GM10248 (cell line): ENCODE measurements at regions of chr17 and their contacts with region 1.

Region 1: GRCh38 chr17:55735731-55736405 is 13.2 kb upstream of the TMEM100 start:
- DNase-seq: peak; percentile 32
- CTCF ChIP-seq: peak; percentile 57

Region 2: DNA sequence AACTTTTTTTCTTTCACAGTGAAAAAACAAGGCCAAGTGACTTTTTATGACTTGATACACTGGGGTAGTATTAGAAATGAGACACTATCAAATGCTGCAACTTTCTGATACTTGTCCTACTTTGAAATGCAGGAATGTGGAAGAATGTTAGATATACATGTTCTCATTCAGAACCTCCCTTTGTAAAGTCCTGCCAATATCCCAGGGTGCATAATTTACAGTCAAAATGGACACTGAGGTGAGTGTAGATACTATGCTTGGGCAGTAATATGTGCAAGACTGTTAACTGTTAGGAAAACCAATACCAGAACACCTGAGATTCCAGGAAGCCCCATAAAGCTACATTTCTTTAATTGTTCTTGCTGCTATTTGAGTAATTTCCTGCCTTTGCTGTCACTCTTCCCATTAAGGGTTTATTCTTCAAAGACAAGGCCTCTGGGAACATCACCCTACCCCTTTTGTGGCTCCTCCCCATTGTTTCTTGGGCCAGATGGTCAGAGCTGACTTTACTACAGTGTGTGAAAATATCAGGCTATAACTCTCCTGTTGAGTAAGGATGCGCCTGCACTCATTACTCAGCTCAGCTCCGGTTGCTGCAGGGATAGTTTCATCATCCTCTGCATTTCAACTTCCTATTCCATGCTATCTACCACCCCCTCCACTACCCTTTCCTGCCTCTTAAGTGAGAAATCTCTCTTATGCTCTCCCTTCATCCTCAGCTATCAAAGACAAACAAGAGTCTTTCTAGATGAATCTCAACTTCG is 61.9 kb before region 1 on chr17:
- CTCF ChIA-PET with region 1: no interaction called
- POLR2A ChIA-PET with region 1: no interaction called
- DNase-seq: no peak
- CTCF ChIP-seq: no peak

Region 3: GRCh38 chr17:55717898-55718735 is 17.8 kb before region 1 on chr17:
- CTCF ChIA-PET with region 1: interaction called, 21 read pairs
- POLR2A ChIA-PET with region 1: no interaction called
- DNase-seq: peak; percentile 24
- CTCF ChIP-seq: peak; percentile 60

Region 4: DNA sequence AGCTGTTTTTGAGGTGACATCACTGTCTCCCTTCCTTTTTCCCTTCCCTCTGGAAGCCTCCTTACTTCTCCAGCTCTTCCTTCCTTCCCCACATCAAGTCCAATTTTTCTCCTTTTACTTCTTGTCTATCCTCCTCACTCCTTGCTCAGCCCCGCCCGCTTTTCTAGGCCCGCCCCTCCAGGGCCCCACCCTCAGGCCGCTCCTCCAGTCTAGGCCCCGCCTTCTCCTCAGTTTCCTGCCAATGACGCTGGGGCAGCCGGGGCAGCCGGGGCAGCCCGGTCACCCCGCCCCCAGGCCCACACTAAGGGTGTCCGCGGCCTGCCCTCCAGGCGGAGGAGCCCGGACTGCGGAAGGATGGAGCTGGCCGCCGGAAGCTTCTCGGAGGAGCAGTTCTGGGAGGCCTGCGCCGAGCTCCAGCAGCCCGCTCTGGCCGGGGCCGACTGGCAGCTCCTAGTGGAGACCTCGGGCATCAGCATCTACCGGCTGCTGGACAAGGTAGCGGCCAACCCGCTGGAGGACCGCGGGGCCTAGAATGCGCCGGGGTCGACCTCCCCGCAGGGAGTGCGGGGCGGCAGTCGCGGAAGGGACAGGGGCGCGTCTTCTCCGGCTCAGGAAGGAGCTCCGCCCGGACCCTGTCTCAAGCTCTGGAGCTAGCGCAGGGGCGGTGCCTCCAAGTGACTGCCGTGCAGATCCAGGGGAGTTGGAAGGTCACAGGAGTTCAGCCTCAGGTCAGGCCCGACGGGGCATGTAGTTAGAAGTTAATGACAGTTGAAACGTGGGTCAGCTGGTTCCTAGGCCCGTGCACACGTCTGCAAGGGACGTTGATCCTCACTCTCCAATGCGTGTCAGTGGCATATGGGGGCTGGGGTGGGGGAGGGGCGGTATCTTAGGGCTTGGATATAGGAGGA is 15.1 kb after region 1 on chr17 and contains the start of gene PCTP:
- CTCF ChIA-PET with region 1: interaction called, 28 read pairs
- POLR2A ChIA-PET with region 1: no interaction called
- DNase-seq: peak; percentile 92
- CTCF ChIP-seq: no peak